ENCODE measurements at regions of chr12 and their contacts with region 1.

Region 1: DNA sequence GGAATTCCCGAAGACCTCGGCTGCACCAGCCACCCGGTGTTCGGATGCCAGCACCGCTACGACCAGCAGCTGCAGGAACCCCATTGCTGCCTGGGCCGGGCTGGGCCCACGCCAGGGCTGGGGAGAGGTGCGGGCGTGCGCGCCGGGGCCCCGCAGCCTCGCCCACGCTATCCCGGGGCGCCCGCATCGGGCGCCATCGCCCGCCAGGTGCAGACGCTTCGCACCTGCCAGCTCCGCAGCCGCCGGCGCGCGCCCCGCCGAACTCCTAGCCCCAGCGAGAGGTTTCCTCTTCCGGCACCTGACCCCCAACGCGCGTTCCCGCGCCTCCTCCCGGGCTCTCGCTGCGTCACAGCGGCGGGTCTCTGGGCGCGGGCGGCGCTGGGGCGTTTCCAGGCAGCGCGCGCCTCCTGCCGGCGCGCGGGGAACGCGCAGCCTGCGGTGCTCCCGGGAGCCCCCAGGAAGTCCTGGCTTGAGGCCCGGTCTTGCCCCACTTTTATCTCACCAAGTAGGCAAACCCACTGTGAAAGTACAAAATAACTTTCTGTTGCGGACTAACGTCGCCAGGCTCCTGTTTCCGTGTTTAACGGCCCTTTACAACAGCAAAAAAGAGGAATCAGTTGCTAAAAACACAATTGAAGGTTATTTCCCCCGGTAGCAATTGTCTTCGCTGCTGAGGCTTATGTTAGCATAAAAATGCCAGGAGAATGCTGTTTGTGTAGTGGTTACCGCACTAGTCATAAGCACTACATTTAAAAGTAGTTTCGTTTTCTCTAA is at the start of gene TM7SF3:
- DNase-seq: no peak
- H3K4me3 ChIP-seq: peak within 1 kb of the TSS; percentile 78
- CTCF ChIP-seq: peak; percentile 73

Region 2: DNA sequence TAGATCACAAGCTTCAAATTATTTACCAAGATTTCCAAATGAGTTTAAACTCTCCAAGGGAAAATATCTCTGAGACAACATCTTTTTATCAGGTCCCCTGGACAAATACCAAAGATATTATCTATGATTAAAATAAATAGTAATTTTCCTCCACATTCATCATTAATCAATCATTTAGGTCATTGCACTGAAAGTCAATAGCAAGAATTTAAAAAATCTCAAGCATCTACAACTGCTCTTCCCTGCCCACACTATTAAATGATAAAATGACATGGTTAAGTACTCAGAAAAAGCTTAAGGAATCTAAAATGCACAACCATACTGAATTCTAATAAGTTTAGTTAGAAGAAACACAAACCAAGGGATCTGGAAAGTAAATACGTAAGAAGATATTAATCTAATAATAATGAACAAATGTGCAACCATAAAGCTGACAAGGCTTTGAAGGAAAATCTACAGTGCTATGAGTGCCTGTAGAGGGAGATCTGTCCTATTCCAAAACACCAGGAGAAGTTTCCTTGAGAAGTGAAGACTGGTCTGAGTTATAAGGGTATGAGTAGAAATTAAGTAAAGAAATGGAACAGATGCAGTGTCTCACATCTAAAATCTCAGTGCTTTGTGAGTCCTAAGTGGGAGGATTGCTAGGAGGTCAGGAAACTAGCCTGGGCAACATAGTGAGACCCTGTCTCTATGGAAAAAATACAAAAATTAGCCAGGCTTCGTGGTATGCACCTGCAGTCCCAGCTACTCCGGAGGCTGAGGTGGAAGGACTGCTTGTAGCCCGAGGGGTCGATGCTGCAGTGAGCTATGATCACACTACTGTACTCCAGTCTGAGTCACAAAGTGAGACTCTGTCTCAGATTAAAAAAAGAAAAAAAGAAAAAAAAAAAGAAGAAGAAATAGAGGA is 95.7 kb before region 1 on chr12:
- CTCF ChIA-PET with region 1: interaction called, 11 read pairs
- POLR2A ChIA-PET with region 1: no interaction called
- DNase-seq: no peak
- H3K4me3 ChIP-seq: no peak overlapping the region
- CTCF ChIP-seq: no peak

Region 3: DNA sequence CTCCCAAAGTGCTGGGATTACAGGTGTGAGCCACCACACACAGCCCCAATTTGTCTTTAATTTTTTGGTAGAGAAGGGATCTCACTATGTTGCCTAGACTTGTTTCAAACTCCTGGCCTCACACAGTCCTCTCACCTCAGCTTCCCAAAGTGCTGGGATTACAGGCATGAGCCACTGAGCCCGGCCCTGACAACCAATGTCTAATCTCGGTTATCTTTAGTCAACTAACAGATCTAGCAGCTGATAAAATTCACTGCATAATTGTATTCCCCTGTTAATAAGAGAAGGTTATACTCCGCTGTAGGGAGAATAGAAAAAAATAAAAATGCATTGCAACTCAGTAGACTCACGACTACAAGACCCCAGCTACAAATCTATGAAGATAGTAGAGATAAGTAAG is 32.0 kb before region 1 on chr12:
- CTCF ChIA-PET with region 1: interaction called, 11 read pairs
- POLR2A ChIA-PET with region 1: no interaction called
- DNase-seq: no peak
- H3K4me3 ChIP-seq: no peak overlapping the region
- CTCF ChIP-seq: no peak

Region 4: GRCh38 chr12:27024291-27024690 is 10.0 kb after region 1 on chr12:
- CTCF ChIA-PET with region 1: interaction called, 35 read pairs
- POLR2A ChIA-PET with region 1: no interaction called
- DNase-seq: no peak
- H3K4me3 ChIP-seq: no peak overlapping the region
- CTCF ChIP-seq: no peak

Region 5: GRCh38 chr12:27094726-27095125 is 80.5 kb after region 1 on chr12:
- CTCF ChIA-PET with region 1: no interaction called
- POLR2A ChIA-PET with region 1: no interaction called
- DNase-seq: no peak
- H3K4me3 ChIP-seq: no peak overlapping the region
- CTCF ChIP-seq: no peak

Region 6: GRCh38 chr12:27142101-27142721 is 127.9 kb after region 1 on chr12:
- CTCF ChIA-PET with region 1: interaction called, 32 read pairs
- POLR2A ChIA-PET with region 1: no interaction called
- DNase-seq: peak; percentile 28
- H3K4me3 ChIP-seq: no peak overlapping the region
- CTCF ChIP-seq: peak; percentile 86

Region 7: DNA sequence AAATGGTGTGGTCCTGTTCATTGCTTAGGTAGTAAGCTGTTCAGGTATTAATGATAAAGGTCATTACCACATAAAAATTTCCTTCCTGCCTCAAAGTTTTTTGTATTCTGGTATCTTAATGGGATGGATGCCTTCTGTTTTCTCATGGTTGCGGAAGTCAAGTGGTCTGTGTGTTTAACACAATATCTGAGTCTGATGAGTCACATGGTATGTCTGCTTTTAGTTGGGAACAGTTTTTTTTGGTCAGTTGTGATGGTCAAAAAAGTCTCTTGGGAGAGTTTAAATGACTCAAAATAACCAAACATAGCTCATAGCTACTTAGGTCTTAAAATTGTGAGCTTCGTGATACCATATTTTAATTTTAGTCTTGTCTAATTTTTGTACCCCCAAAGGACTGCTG is 270.5 kb after region 1 on chr12:
- CTCF ChIA-PET with region 1: interaction called, 10 read pairs
- POLR2A ChIA-PET with region 1: no interaction called
- DNase-seq: peak; percentile 59
- H3K4me3 ChIP-seq: no peak overlapping the region
- CTCF ChIP-seq: no peak